Breast epithelium (tissue), 4 donors: ENCODE measurements at regions of chr20 and their contacts with region 1.

Region 1: GRCh38 chr20:5191829-5192569 is 65.2 kb downstream of the CDS2 start:
- DNase-seq: no peak
- H3K4me3 ChIP-seq: no peak overlapping the region
- H3K27ac ChIP-seq: peak overlapping the region in 1 of 2 donors; percentile 17
- H3K4me1 ChIP-seq: no peaks in the 10 kb centered on the region
- H3K27me3 ChIP-seq: no peaks in the 10 kb centered on the region
- CTCF ChIP-seq: peak; percentile 55 to 87 (median 72)
- POLR2A ChIP-seq: no peak

Region 2: GRCh38 chr20:4369798-4370124 is 822.2 kb before region 1 on chr20:
- intact Hi-C with region 1: loop called (anchors 5 kb)
- DNase-seq: no peak
- H3K4me3 ChIP-seq: no peak overlapping the region
- H3K27ac ChIP-seq: no peak overlapping the region
- H3K4me1 ChIP-seq: no peaks in the 10 kb centered on the region
- H3K27me3 ChIP-seq: no peaks in the 10 kb centered on the region
- CTCF ChIP-seq: no peak
- POLR2A ChIP-seq: no peak

Region 3: GRCh38 chr20:4835244-4836177 is 356.5 kb before region 1 on chr20:
- intact Hi-C with region 1: no loop called
- DNase-seq: peak in 1 of 2 donors; percentile 71
- H3K4me3 ChIP-seq: peak overlapping the region in 1 of 3 donors; percentile 31
- H3K27ac ChIP-seq: peak overlapping the region in 1 of 2 donors; percentile 43
- H3K4me1 ChIP-seq: no peaks in the 10 kb centered on the region
- H3K27me3 ChIP-seq: no peaks in the 10 kb centered on the region
- CTCF ChIP-seq: no peak
- POLR2A ChIP-seq: no peak

Region 4: GRCh38 chr20:5126512-5127203 is 65.3 kb before region 1 on chr20 and contains the start of gene CDS2:
- intact Hi-C with region 1: loop called (anchors 10 kb)
- DNase-seq: peak; percentile 99 to 100
- H3K4me3 ChIP-seq: peak within 1 kb of the TSS; percentile 79 to 85 (median 84)
- H3K27ac ChIP-seq: peak within 1 kb of the TSS; percentile 96
- H3K4me1 ChIP-seq: no peaks in the 10 kb centered on the region
- H3K27me3 ChIP-seq: no peaks in the 10 kb centered on the region
- CTCF ChIP-seq: peak in 2 of 3 donors; percentile 34 to 45
- POLR2A ChIP-seq: peak; percentile 13
- total RNA-seq, gene CDS2: 29.2 to 42.9 (median 37.6) TPM